Activated CD4-positive, alpha-beta memory T cell treated with anti-CD3 and anti-CD28 coated beads for 36 hours (primary cell): ENCODE measurements at regions of chr3 and their contacts with region 1.

Region 1: GRCh38 chr3:102673271-102674115 is 238.7 kb downstream of the ZPLD1 start:
- DNase-seq: peak; percentile 72
- H3K4me3 Mint-ChIP-seq: no peak overlapping the region
- H3K27ac Mint-ChIP-seq: no peak overlapping the region
- H3K4me1 Mint-ChIP-seq: no peaks in the 10 kb centered on the region
- H3K27me3 Mint-ChIP-seq: peaks cover 12% of the 10 kb centered on the region

Region 2: GRCh38 chr3:102741108-102741507 is 67.6 kb after region 1 on chr3:
- CTCF ChIA-PET with region 1: interaction called, 10 read pairs
- POLR2A ChIA-PET with region 1: no interaction called
- intact Hi-C with region 1: no loop called
- DNase-seq: no peak
- H3K4me3 Mint-ChIP-seq: no peak overlapping the region
- H3K27ac Mint-ChIP-seq: no peak overlapping the region
- H3K4me1 Mint-ChIP-seq: no peaks in the 10 kb centered on the region
- H3K27me3 Mint-ChIP-seq: no peaks in the 10 kb centered on the region